HEK293 (cell line): ENCODE measurements at regions of chr14 and their contacts with region 1.

Region 1: GRCh38 chr14:106530423-106531107 is 1004.2 kb downstream of the TMEM121 start:
- H3K4me3 ChIP-seq: no peak overlapping the region
- H3K27ac ChIP-seq: no peak overlapping the region
- H3K4me1 ChIP-seq: no peaks in the 10 kb centered on the region
- CTCF ChIP-seq: no peak

Region 2: DNA sequence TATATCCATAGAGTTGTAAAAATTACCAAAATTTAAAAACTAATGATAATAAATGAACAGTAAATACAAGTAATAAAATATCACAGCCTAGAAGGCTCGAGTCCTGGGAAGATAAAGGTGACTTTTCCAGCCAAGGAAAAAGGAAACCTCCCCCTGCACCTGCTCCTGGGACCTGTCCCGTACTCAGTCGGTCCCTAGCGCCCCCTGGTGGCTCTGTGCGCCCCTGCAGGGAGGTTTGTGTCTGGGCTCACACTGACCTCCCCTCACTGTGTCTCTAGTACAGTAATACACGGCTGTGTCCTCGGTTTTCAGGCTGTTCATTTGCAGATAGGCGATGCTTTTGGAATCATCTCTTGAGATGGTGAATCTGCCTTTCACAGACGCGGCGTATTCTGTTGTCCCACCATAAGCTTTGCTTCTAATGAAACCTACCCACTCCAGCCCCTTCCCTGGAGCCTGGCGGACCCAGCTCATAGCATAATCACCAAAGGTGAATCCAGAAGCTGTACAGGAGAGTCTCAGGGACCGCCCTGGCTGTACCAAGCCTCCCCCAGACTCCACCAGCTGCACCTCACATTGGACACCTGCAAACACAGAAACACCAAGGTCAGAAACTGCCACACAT is 26.2 kb after region 1 on chr14:
- CTCF ChIA-PET with region 1: interaction called, 10 read pairs
- POLR2A ChIA-PET with region 1: no interaction called
- H3K4me3 ChIP-seq: no peak overlapping the region
- H3K27ac ChIP-seq: no peak overlapping the region
- H3K4me1 ChIP-seq: no peaks in the 10 kb centered on the region
- CTCF ChIP-seq: no peak